ENCODE measurements at regions of chr6 and their contacts with region 1.

Region 1: GRCh38 chr6:72084992-72085569 is 198.7 kb downstream of the RIMS1 start:
- DNase-seq: peak; percentile 18
- CTCF ChIP-seq: peak; percentile 14

Region 2: DNA sequence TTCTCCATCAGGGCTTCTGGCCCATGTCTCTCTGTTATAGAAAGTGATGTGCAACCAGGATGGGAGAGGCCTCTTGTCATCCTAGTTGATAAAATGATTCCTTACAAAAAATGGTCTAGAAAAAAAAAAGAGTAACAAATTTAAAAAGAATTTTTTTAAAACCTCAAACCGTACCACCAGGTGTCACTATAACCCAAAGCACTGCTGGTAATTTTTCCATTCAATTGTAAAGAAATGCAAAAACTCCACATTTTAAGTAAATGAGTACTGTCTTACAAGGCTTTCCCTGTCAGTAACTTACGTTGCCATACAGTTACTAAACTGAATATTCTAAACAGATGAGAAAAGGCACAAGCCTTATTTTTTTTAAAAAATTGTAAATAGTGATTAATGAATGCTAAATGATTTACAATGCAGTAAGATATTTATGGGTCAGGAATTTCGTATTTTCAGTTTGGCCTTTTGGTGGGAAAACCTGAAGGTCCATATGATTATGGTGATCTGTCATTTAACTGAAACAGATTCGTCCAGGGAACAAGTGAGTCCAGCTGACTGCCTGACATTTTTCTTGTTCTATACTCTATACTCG is 701.1 kb before region 1 on chr6:
- in situ Hi-C with region 1: loop called (anchors 25 kb)
- DNase-seq: peak; percentile 10
- CTCF ChIP-seq: peak; percentile 29

Region 3: GRCh38 chr6:71533939-71534379 is 551.1 kb before region 1 on chr6:
- in situ Hi-C with region 1: loop called (anchors 25 kb)
- DNase-seq: peak; percentile 33
- CTCF ChIP-seq: peak; percentile 49

Region 4: DNA sequence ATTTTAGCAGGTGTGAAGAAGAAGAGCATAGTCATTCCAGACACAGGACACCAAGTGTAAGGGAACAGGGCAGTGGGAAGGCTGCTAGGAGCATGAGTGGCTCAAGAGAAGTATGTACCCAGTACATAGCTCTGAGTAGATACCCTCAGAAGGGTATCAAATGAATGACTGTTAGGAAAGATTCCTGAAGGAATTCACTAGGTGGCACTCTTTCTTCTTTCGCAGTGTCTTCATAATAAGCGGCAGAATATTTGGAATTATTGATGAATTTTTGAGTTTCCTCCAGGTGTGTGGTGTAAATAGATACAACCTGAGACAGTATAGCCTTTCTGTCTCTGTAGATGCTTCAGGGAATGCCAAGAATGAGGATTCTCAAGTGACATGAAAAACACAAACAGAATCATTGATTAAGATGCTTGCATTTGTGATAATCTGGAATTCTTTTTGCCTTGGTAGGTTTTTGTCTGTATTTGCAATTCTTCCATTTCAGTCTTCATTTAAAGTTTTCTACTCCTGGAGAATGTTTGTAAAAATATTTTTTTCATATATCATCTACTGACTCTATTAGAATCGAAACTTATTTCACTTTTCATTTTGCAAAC is 463.1 kb before region 1 on chr6:
- in situ Hi-C with region 1: loop called (anchors 25 kb)
- DNase-seq: no peak
- CTCF ChIP-seq: no peak

Measured in GM13976 (cell line).